Mammary epithelial cell (primary cell): ENCODE measurements at regions of chr21 and their contacts with region 1.

Region 1: DNA sequence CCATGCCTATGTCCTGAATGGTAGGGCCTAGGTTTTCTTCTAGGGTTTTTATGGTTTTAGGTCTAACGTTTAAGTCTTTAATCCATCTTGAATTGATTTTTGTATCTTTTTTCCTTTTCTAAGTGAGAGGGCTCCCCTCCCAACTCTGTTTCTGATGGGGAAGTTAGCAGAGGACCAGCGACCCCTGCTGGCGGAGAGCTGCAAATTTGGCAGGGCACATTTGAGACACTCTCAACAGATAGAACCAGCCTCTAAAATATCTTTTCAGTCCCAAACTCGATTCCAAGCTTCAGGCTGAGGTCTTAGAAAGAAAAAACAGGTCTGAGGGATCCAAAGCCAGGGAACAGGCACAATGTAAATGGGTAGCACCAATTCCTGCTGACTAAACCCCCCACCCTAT is 32.5 kb downstream of the LRRC3 start:
- DNase-seq: no peak
- H3K4me3 ChIP-seq: no peak overlapping the region
- H3K27ac ChIP-seq: no peak overlapping the region
- H3K4me1 ChIP-seq: no peaks in the 10 kb centered on the region
- H3K27me3 ChIP-seq: no peaks in the 10 kb centered on the region
- CTCF ChIP-seq: peak; percentile 48 to 55

Region 2: GRCh38 chr21:44294391-44295162 is 193.3 kb before region 1 on chr21:
- CTCF ChIA-PET with region 1: no interaction called
- dilution Hi-C with region 1: no loop called
- in situ Hi-C with region 1: no loop called
- intact Hi-C with region 1: no loop called
- DNase-seq: no peak
- H3K4me3 ChIP-seq: no peak overlapping the region
- H3K27ac ChIP-seq: no peak overlapping the region
- H3K4me1 ChIP-seq: peaks cover 6% of the 10 kb centered on the region
- H3K27me3 ChIP-seq: no peaks in the 10 kb centered on the region
- CTCF ChIP-seq: no peak

Region 3: DNA sequence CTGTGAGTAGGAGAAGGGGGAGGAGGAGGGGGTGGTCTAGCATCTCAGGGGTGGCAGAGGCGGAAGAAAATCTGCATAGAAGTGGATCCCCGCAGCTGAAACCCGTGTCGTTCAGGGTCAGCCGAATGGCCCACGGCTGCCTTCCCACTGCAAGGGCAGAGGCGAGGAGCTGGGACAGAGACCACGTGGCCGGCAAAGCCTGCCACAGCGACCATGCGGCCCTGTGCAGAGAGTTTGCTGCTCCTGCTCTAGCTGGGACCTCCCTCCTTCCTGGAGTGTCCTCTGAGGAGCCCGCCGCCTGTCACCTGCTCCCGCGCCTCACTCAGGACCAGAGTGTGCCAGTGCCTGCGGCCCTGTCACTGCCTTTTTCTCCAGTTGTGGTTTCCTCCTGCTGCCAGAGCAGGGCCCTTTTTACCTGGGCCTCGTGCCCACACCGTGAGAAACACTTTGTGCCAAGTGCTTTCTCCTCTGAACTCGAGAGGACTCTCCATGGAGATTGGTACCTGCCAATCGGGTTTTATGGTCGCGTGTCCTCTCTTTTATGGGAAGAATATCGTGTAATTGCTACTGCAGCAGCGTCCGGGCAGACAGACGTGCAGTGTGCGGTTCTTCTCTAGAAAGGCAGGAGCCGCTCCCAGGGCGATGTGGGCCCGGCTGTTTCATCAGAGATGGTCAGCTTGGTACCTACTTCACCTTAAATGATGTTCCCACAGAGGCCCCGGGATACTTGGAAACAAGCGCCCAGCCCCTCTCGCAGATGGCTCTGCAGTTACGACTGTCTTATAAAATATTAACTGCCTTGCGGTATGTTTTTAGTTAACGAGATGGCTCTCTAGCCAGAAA is 139.7 kb before region 1 on chr21:
- CTCF ChIA-PET with region 1: no interaction called
- dilution Hi-C with region 1: loop called (anchors 10 kb)
- in situ Hi-C with region 1: no loop called
- intact Hi-C with region 1: no loop called
- DNase-seq: no peak
- H3K4me3 ChIP-seq: no peak overlapping the region
- H3K27ac ChIP-seq: no peak overlapping the region
- H3K4me1 ChIP-seq: no peaks in the 10 kb centered on the region
- H3K27me3 ChIP-seq: peaks cover 15% of the 10 kb centered on the region
- CTCF ChIP-seq: no peak

Region 4: GRCh38 chr21:44657635-44658540 is 170.1 kb after region 1 on chr21 and contains the start of gene KRTAP12-3:
- CTCF ChIA-PET with region 1: no interaction called
- dilution Hi-C with region 1: loop called (anchors 10 kb)
- in situ Hi-C with region 1: no loop called
- intact Hi-C with region 1: no loop called
- DNase-seq: no peak
- H3K4me3 ChIP-seq: no peak within 1 kb of the TSS
- H3K27ac ChIP-seq: no peak within 1 kb of the TSS
- H3K4me1 ChIP-seq: no peaks in the 10 kb centered on the region
- H3K27me3 ChIP-seq: peaks cover 2% of the 10 kb centered on the region
- CTCF ChIP-seq: no peak
- total RNA-seq, gene KRTAP12-3: not detected